Heart right ventricle (tissue), 16 donors: ENCODE measurements at regions of chr4 and their contacts with region 1.

Region 1: GRCh38 chr4:82462415-82462831 is 32.0 kb downstream of the ENOPH1 start:
- DNase-seq: peak; percentile 79 to 88
- ATAC-seq: peak; percentile 85 to 93 (median 88)
- H3K4me3 ChIP-seq: no peak overlapping the region
- H3K27ac ChIP-seq: no peak overlapping the region
- H3K4me1 ChIP-seq: peaks cover 0 to 11% (median 3%) of the 10 kb centered on the region in 9 donors
- H3K27me3 ChIP-seq: no peaks in the 10 kb centered on the region
- CTCF ChIP-seq: peak; percentile 80 to 96 (median 89)

Region 2: DNA sequence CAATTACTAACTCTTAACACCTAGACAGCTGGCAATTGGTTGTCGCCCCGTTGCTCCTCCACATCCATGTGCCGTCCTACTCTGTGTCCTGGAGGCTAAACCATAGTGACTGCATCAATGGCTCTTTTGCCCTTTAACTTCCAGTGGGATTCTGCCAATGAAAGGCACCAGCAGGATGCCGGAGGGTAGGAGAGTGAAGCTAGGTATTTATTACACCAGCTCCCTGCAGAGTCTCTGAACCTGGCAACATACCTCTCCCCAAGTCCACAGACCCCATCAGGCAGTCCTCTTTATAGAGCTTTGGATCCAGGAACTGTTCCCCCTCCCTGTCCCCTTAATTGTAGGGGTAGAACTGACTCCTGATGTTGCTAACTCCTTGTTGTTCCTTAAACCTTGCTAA is 515.4 kb before region 1 on chr4:
- intact Hi-C with region 1: no loop called
- DNase-seq: no peak
- ATAC-seq: no peak
- H3K4me3 ChIP-seq: no peak overlapping the region
- H3K27ac ChIP-seq: no peak overlapping the region
- H3K4me1 ChIP-seq: no peaks in the 10 kb centered on the region
- H3K27me3 ChIP-seq: no peaks in the 10 kb centered on the region
- CTCF ChIP-seq: no peak

Region 3: DNA sequence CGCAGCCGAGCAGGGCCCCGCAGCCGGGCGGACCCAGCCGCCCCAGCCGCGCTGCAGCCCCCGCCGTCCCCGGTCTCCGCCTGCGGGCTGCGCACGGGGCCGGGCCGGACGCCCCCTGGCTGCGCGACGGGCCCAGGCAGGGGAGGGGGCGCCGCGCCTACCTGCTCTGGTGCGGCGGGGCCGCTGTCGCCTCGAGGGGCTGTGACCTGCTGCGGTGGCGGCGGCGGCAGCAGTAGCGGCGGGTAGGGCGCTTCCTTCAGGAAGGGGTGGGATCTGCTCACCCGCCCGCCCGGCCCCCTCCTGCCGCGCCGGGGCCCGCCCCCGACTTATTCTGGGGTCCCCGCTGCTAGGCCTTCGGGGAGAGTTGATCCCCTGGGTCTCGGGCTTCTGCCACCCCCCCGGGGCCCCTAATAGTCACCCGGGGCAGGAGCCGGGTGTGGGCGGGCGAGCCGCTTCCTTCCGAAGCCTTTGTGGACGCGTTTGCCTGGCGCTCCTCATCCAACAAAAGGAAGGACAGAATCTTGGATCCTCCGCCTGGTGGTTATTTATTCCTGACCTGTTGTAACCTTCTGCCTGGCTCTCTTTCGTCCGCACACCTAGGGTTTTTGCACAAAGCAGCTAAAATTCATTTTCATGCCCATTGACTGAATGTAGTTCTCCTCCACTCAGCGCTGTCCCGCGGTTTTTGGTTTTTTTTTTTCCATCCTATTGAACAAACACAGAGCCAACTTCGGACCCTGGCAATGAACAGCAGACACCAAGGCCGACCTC is 99.5 kb after region 1 on chr4 and contains the start of gene TMEM150C:
- intact Hi-C with region 1: loop called in 1 of 10 experiments (anchors 10 kb)
- DNase-seq: peak; percentile 34 to 62
- ATAC-seq: peak; percentile 76 to 92 (median 85)
- H3K4me3 ChIP-seq: peak within 1 kb of the TSS; percentile 62 to 91 (median 72)
- H3K27ac ChIP-seq: peak within 1 kb of the TSS in 9 of 10 donors; percentile 65 to 85 (median 74)
- H3K4me1 ChIP-seq: peaks cover 0 to 26% (median 11%) of the 10 kb centered on the region in 9 donors
- H3K27me3 ChIP-seq: peaks cover 0 to 41% (median 0%) of the 10 kb centered on the region in 7 donors
- CTCF ChIP-seq: peak in 7 of 9 donors; percentile 5 to 51 (median 24)
- total RNA-seq, gene TMEM150C: 8.5 to 22.7 (median 12.6) TPM

Region 4: DNA sequence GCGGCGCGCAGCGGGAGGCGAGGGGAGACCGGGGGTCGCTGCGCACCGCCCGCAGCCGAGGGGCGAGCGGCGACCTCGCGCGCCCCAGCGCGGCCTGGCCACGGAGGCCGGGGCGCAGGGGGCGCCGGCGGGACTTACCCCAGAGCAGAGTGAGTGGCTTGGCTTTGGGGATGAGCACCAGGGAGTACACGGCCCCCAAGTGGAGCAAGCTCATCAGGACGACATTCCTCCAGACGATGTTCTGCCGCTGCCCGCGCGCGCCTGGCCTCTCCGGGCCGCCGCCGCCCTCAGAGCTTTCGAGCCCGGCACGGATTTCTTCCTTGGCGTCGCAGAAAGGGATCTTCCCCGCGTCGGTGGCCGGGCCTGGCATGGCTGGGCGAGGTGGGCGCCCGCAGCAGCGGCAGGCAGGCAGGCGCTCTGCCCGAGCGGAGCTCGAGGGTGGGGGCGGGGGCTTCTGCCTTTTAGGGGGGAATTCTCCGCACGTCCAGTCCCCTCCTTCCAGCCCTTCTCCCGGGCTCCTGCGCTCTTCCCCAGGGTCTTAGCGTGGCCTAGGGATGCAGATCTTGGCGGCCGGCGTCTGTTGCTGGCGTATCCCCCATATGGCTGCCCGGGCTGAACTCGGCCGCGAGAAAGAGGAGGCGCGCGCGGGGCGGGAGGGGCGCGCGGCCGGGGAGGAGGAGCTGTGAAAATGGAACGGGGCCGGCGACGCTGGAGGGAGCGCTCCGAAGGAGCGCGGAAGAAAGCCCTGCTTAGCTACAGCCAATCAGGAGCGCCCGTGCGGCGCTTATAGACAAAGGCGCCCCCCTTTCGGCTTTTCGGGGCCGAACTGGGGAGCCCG is 336.0 kb after region 1 on chr4 and contains the start of gene SCD5:
- intact Hi-C with region 1: loop called in 2 of 10 experiments (anchors 10 kb)
- DNase-seq: peak; percentile 67 to 75
- ATAC-seq: peak; percentile 87 to 95 (median 92)
- H3K4me3 ChIP-seq: peak within 1 kb of the TSS; percentile 47 to 86 (median 68)
- H3K27ac ChIP-seq: peak within 1 kb of the TSS in 6 of 10 donors; percentile 31 to 64 (median 52)
- H3K4me1 ChIP-seq: peaks cover 0 to 29% (median 20%) of the 10 kb centered on the region in 9 donors
- H3K27me3 ChIP-seq: peaks cover 0 to 50% (median 6%) of the 10 kb centered on the region in 7 donors
- CTCF ChIP-seq: peak in 1 of 9 donors; percentile 10
- total RNA-seq, gene SCD5: 1.7 to 5.0 (median 3.0) TPM

Region 5: GRCh38 chr4:83252782-83253405 is 790.5 kb after region 1 on chr4:
- intact Hi-C with region 1: loop called in 1 of 10 experiments (anchors 5 kb)
- DNase-seq: peak in 1 of 2 donors; percentile 58
- ATAC-seq: peak in 5 of 8 donors; percentile 41 to 66 (median 59)
- H3K4me3 ChIP-seq: no peak overlapping the region
- H3K27ac ChIP-seq: no peak overlapping the region
- H3K4me1 ChIP-seq: peaks cover 0 to 28% (median 2%) of the 10 kb centered on the region in 9 donors
- H3K27me3 ChIP-seq: no peaks in the 10 kb centered on the region
- CTCF ChIP-seq: peak in 8 of 9 donors; percentile 14 to 82 (median 54)

Region 6: DNA sequence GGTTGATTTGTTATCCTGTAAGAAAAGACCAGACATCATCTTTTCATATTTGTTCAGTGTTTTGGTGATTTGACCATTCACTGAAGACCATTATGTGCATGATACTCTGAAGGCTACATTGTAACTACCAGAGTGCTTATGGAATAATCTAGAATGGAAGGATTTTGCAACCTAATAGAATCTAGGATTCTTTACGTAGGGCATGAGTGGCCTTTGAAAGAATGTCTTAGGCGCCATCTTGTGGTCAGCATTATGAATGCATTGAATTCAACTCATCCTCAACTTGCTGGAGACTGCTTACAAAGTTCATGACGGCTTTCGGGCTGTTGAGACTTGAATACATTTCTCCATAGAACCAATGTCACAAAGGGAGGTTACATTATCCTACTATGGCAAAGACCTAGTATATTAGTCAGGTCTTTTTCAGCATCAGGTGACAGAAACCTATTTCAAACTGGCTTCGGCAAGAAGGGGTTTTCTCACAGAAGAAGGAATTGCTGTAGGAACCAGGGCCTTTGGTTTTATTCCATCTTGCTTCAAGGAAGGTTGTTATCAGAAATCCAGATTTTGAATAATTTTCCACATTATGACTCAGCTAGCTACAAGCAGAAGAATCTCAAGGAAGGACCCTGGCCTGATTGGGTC is 1177.5 kb after region 1 on chr4:
- intact Hi-C with region 1: loop called in 1 of 10 experiments (anchors 10 kb)
- DNase-seq: peak in 1 of 2 donors; percentile 68
- ATAC-seq: peak; percentile 42 to 89 (median 86)
- H3K4me3 ChIP-seq: no peak overlapping the region
- H3K27ac ChIP-seq: no peak overlapping the region
- H3K4me1 ChIP-seq: peaks cover 0 to 3% (median 0%) of the 10 kb centered on the region in 9 donors
- H3K27me3 ChIP-seq: no peaks in the 10 kb centered on the region
- CTCF ChIP-seq: peak; percentile 73 to 88 (median 83)